Cardiac septum (tissue), 1 donor: ENCODE measurements at regions of chr20 and their contacts with region 1.

Region 1: DNA sequence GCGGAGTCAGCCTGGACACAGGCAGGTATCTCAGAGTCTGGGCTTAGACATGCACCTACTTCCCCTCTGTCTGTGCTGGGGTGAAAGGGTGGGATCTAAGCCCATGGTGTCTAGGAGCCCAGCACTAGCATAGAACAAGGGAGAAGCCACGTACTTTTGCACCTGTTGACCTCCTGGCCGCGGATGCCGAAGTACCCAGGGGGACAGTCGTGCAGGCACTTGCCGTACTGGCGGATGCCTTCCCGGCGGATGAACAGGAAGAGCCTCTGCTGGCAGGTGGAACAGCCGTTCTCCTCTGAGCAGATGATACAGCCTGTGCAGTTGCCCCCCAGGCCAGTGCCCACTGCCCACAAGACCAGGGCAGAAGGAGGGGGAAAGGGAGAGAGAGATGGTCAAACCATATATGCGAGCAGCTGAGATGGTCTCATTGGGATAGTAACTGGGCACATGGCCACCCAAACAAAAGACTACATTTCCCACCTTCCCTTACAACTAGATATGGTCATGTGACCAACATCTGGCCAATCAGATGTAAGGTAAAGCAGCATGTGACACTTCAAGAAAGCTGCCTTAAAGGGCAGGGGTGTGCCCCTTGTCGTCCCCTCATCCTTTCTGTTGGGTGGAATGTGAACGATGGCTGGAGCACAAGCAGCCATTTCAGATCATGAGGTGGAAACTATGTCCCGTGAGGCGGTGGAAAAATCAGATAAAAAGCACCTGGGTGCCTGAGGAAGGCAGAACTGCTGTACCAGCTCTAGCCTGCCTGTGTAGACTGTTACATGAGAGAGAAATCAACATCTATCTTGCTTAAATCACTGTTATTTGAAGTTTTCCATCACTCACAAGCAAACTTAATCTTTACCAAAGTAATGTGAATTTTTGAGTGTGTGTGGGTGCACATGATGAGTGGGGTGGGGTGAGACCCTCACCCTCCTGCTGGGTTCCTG is 34.0 kb downstream of the RSPO4 start:
- DNase-seq: no peak

Region 2: GRCh38 chr20:1199212-1199873 is 231.3 kb after region 1 on chr20:
- intact Hi-C with region 1: loop called (anchors 10 kb)
- DNase-seq: no peak